ENCODE measurements at regions of chr6 and their contacts with region 1.

Region 1: DNA sequence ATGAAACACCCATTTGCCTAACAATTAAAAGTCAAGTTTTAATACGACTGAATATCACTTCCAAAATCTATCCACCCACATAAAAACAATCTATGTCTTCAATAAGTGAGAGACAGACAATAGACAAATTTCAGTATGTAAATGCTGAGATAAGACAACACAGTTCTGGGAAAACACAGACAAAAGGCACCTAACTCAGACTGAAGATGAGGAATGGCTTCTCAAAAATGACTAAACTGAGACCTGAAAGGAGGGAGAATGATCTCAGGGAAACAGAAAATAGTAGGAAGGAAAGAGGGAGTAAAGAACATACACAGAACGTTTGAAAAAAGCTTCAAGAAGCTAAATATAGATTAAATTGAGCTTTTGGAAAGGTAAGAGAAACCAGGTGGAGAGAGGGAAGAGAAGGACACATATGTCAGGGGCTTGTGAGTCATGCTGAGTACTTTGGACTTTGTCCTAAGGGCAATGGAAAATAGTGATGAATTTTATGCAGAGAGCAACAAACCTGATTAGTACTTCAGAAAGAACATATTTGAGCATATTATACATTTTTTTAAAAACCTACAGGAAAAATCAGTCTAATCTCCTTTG is 16.1 kb downstream of the LMBRD1 start:
- DNase-seq: no peak
- ATAC-seq: no peak
- H3K4me3 ChIP-seq: no peak overlapping the region
- H3K27ac ChIP-seq: no peak overlapping the region
- H3K4me1 ChIP-seq: peaks cover 2% of the 10 kb centered on the region; the same call in 1 of the 2 replicates
- H3K27me3 ChIP-seq: no peaks in the 10 kb centered on the region
- CTCF ChIP-seq: no peak
- POLR2A ChIP-seq: no peak
- RAD21 ChIP-seq: no peak

Region 2: DNA sequence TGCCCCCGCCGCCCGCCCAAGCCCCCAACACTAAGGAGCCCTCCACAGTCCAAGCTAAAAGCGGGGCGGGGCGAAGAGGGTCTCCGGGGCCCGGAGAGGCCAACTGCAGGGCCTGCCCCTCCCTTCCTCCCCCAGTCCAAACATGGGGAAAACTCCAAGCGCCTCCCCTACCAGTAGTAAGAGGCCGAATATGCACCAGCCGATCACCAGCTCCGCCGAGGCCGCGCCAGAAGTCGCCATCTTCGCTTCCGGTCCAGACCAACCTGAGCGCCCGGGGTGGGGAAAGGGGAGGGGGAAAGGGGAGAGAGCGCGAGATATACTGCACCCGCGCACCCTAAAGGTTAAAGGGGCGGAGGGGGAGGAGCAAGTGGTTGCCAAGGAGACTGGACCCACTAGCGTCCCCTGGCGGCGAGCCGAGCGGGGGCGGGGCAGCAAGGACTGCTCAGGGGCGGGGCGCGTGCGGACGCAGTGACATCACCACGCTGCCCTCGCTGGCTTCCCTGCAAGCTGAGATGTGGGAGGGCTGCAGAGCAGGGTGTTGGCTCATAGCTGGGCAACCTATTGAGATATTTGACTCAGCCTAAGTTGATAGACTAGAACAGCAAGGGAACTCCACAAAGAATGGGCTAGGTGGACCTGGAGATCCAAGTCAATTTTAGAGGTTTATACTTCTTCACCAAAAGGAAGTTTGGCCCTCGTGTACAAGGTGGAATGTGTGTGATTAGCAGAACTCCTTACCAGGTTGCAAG is 16.1 kb after region 1 on chr6 and contains the start of gene LMBRD1:
- CTCF ChIA-PET with region 1: interaction called, 4 read pairs
- POLR2A ChIA-PET with region 1: interaction called, 10 read pairs
- dilution Hi-C with region 1: no loop called
- in situ Hi-C with region 1: no loop called
- intact Hi-C with region 1: no loop called
- DNase-seq: peak; percentile 94
- ATAC-seq: peak; percentile 98
- H3K4me3 ChIP-seq: peak within 1 kb of the TSS; percentile 94
- H3K27ac ChIP-seq: peak within 1 kb of the TSS; percentile 65
- H3K4me1 ChIP-seq: 0 out of 2 replicates have a peak, but pooled peaks cover 2% of the 10 kb centered on the region
- H3K27me3 ChIP-seq: no peaks in the 10 kb centered on the region
- CTCF ChIP-seq: peak; percentile 85
- POLR2A ChIP-seq: 0 out of 2 replicates have a peak, but pooled peaks have one; percentile 46
- RAD21 ChIP-seq: no peak
- total RNA-seq, gene LMBRD1: 3.9 and 12.8 TPM in 2 replicates

Region 3: GRCh38 chr6:69887026-69887425 is 106.3 kb after region 1 on chr6:
- CTCF ChIA-PET with region 1: no interaction called
- POLR2A ChIA-PET with region 1: no interaction called
- dilution Hi-C with region 1: no loop called
- in situ Hi-C with region 1: no loop called
- intact Hi-C with region 1: no loop called
- DNase-seq: peak; percentile 25
- ATAC-seq: no peak
- H3K4me3 ChIP-seq: no peak overlapping the region
- H3K27ac ChIP-seq: no peak overlapping the region
- H3K4me1 ChIP-seq: no peaks in the 10 kb centered on the region
- H3K27me3 ChIP-seq: no peaks in the 10 kb centered on the region
- CTCF ChIP-seq: no peak
- POLR2A ChIP-seq: no peak
- RAD21 ChIP-seq: no peak

Measured in IMR-90 (cell line).